Lower leg skin (tissue), 4 donors: ENCODE measurements at regions of chr15 and their contacts with region 1.

Region 1: GRCh38 chr15:51380999-51381795 is 39.7 kb downstream of the GLDN start:
- DNase-seq: peak; percentile 53 to 86
- H3K4me3 ChIP-seq: no peak overlapping the region
- CTCF ChIP-seq: peak in 1 of 3 donors; percentile 86
- POLR2A ChIP-seq: no peak

Region 2: GRCh38 chr15:50641288-50641687 is 739.9 kb before region 1 on chr15:
- intact Hi-C with region 1: no loop called
- DNase-seq: no peak
- H3K4me3 ChIP-seq: no peak overlapping the region
- CTCF ChIP-seq: no peak
- POLR2A ChIP-seq: no peak

Region 3: GRCh38 chr15:51162865-51163762 is 218.1 kb before region 1 on chr15:
- intact Hi-C with region 1: loop called (anchors 10 kb)
- DNase-seq: peak; percentile 69 to 93
- H3K4me3 ChIP-seq: no peak overlapping the region
- CTCF ChIP-seq: peak in 1 of 3 donors; percentile 28
- POLR2A ChIP-seq: no peak